OCI-LY7 (cell line): ENCODE measurements at regions of chr5 and their contacts with region 1.

Region 1: DNA sequence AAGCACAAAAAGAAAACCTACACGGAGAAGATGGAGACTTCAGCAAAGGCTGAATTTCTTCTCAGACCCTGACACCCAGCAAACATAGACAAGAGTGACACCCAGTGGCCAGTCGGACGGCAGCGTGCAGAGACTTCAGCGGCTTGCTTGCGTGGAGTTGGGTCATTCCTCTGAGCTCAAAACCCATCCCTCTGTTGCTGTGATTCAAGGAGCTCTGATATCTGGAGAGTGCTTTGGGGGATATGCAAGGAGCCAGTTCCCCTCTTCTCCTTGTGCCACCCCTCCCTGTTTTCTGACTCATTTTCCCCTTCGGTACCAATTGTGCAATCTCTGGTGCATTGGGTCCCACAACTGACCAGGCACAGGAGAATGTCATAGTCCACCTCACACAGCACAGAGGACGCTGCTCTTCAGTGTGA is 27.5 kb downstream of the SH3TC2 start:
- DNase-seq: peak; percentile 54
- H3K4me3 ChIP-seq: no peak overlapping the region
- H3K27ac ChIP-seq: no peak overlapping the region
- H3K4me1 ChIP-seq: no peaks in the 10 kb centered on the region
- CTCF ChIP-seq: peak; percentile 89

Region 2: GRCh38 chr5:148966348-148966747 is 69.0 kb before region 1 on chr5:
- CTCF ChIA-PET with region 1: no interaction called
- POLR2A ChIA-PET with region 1: no interaction called
- intact Hi-C with region 1: loop called (anchors 5 kb)
- DNase-seq: no peak
- H3K4me3 ChIP-seq: no peak overlapping the region
- H3K27ac ChIP-seq: no peak overlapping the region
- H3K4me1 ChIP-seq: no peaks in the 10 kb centered on the region
- CTCF ChIP-seq: no peak

Region 3: GRCh38 chr5:149471406-149472183 is 436.2 kb after region 1 on chr5:
- CTCF ChIA-PET with region 1: no interaction called
- POLR2A ChIA-PET with region 1: no interaction called
- intact Hi-C with region 1: no loop called
- DNase-seq: no peak
- H3K4me3 ChIP-seq: no peak overlapping the region
- H3K27ac ChIP-seq: no peak overlapping the region
- H3K4me1 ChIP-seq: no peaks in the 10 kb centered on the region
- CTCF ChIP-seq: no peak